ENCODE measurements at regions of chr5 and their contacts with region 1.

Region 1: DNA sequence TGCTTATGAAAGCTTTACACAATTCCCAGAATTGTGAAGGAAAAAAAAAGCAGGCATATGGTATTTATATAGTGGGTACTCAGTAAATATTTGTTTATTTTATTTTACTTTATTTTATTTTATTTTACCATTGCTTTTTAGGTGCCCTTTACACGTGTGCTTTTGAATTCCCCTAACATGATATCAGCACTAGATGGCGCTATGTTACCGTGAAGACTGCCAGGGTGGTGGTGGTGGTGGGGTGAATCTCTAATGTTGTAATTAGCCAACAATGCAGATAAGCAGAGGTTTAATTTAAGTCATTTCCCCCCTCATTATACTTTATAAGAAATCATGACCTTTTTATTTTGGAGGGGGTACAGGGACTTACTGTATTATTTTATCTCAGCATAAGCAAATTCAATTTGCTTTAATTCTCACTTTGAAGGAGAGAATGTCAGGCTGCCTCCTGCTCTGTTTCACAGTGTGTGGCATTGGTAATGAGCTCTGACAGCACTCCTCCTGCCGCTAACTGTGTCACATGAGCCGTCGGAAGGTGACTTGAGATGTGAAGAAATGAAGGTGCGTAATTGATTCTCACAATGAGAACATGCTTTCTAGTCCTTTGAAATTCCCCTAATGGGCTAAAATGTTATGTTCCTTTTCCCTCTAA is 165.6 kb downstream of the YTHDC2 start:
- DNase-seq: peak; percentile 24
- H3K4me3 Mint-ChIP-seq: no peak overlapping the region
- H3K27ac Mint-ChIP-seq: no peak overlapping the region
- H3K4me1 Mint-ChIP-seq: no peaks in the 10 kb centered on the region
- H3K27me3 Mint-ChIP-seq: no peaks in the 10 kb centered on the region

Region 2: GRCh38 chr5:114449860-114450421 is 770.9 kb after region 1 on chr5:
- CTCF ChIA-PET with region 1: interaction called, 10 read pairs
- POLR2A ChIA-PET with region 1: no interaction called
- intact Hi-C with region 1: loop called (anchors 1 kb)
- DNase-seq: peak; percentile 60
- H3K4me3 Mint-ChIP-seq: no peak overlapping the region
- H3K27ac Mint-ChIP-seq: no peak overlapping the region
- H3K4me1 Mint-ChIP-seq: peaks cover 4% of the 10 kb centered on the region
- H3K27me3 Mint-ChIP-seq: peaks cover 4% of the 10 kb centered on the region

Region 3: GRCh38 chr5:114789773-114790402 is 1110.8 kb after region 1 on chr5:
- CTCF ChIA-PET with region 1: interaction called, 3 read pairs
- POLR2A ChIA-PET with region 1: no interaction called
- intact Hi-C with region 1: loop called (anchors 5 kb)
- DNase-seq: no peak
- H3K4me3 Mint-ChIP-seq: no peak overlapping the region
- H3K27ac Mint-ChIP-seq: no peak overlapping the region
- H3K4me1 Mint-ChIP-seq: no peaks in the 10 kb centered on the region
- H3K27me3 Mint-ChIP-seq: peaks cover 1% of the 10 kb centered on the region

Measured in activated CD4-positive, alpha-beta memory T cell treated with anti-CD3 and anti-CD28 coated beads for 36 hours (primary cell).